Transverse colon (tissue), 4 donors: ENCODE measurements at regions of chr14 and their contacts with region 1.

Region 1: GRCh38 chr14:55354500-55354899 is 57.1 kb downstream of the ATG14 start:
- DNase-seq: peak; percentile 69
- H3K4me3 ChIP-seq: no peak overlapping the region
- H3K27ac ChIP-seq: peak overlapping the region; percentile 13 to 71 (median 54)
- H3K4me1 ChIP-seq: peaks cover 0 to 40% (median 12%) of the 10 kb centered on the region in 4 donors
- H3K27me3 ChIP-seq: no peaks in the 10 kb centered on the region
- CTCF ChIP-seq: peak; percentile 47 to 80 (median 60)
- EP300 ChIP-seq: no peak
- POLR2A ChIP-seq: no peak

Region 2: DNA sequence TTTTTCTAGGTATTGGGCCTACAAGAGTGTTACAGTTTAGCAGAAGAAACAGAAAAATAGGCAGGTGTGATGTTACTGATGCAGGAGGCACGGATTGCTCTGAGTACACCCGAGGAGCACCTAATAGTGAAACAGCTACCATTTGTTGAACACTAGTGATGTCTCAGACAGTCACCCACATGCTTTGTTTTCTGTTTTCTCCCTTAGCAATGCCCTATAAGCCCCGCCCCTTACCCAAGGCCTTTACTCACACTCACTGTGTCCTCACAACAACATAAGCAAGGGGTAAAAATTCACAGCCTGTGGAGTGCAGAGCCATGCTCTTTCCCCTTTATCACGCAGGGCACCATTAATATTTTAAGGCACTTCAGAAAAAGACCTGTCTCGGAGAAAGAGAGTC is 277.3 kb before region 1 on chr14:
- in situ Hi-C with region 1: no loop called
- intact Hi-C with region 1: no loop called
- DNase-seq: peak; percentile 37
- H3K4me3 ChIP-seq: no peak overlapping the region
- H3K27ac ChIP-seq: peak overlapping the region; percentile 39 to 65 (median 62)
- H3K4me1 ChIP-seq: peaks cover 0 to 10% (median 3%) of the 10 kb centered on the region in 4 donors
- H3K27me3 ChIP-seq: no peaks in the 10 kb centered on the region
- CTCF ChIP-seq: no peak
- EP300 ChIP-seq: no peak
- POLR2A ChIP-seq: no peak

Region 3: DNA sequence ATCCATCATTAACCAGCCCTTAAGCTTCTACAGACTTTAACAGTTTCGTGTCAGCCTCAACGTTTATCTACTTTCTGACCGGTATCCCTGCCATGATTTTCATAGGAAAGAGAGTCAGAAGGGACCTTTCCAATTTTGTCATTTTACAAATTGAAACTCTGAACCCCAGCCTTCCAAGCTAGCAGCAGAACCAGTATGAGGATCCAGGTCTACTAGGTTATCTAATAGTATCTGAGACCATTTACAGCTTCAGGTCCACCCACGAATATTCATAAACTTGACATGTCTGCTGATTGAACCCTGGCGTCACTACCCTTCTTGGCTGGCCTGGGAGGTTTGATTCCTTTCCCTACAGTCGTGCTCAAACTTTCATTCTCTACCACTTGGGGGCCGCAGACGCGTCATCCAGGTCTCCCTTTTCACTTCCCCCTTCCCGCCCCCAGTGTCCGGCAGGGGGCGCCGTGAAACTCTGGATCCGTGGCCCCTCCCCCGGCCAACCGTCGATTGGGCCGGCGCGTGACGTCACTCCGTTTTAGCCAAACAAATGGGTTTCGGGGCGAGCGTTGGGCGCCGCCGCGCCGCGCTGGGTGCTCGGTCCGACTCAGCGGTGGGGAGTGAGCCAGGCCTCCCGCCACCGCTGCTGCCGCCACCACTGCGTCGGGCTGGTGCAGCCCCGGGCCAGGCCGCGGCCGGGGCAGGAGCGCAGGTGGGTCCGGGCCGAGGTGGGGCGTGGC is 83.5 kb before region 1 on chr14 and contains the start of gene FBXO34:
- in situ Hi-C with region 1: loop called in 3 of 4 experiments (anchors 5 to 25 kb)
- intact Hi-C with region 1: no loop called
- DNase-seq: peak; percentile 100
- H3K4me3 ChIP-seq: peak within 1 kb of the TSS; percentile 93 to 98 (median 97)
- H3K27ac ChIP-seq: peak within 1 kb of the TSS; percentile 91 to 98 (median 96)
- H3K4me1 ChIP-seq: peaks cover 13 to 36% (median 27%) of the 10 kb centered on the region in 4 donors
- H3K27me3 ChIP-seq: no peaks in the 10 kb centered on the region
- CTCF ChIP-seq: peak; percentile 97 to 100 (median 99)
- EP300 ChIP-seq: peak; percentile 57
- POLR2A ChIP-seq: peak; percentile 78
- total RNA-seq, gene FBXO34: 34.2 to 129 (median 99.4) TPM